Motor neuron (in vitro differentiated cells): ENCODE measurements at regions of chr11 and their contacts with region 1.

Region 1: GRCh38 chr11:67317205-67317887 is 14.0 kb downstream of the SSH3 start:
- ATAC-seq: peak; percentile 82 to 92 (median 90)
- H3K4me3 ChIP-seq: peak overlapping the region; percentile 52 to 77 (median 63)
- H3K27ac ChIP-seq: peak overlapping the region; percentile 13 to 83
- H3K4me1 ChIP-seq: peaks cover 0 to 8% of the 10 kb centered on the region in 2 donors

Region 2: GRCh38 chr11:67265633-67266423 is 51.5 kb before region 1 on chr11:
- in situ Hi-C with region 1: loop called in 1 of 9 experiments (anchors 10 kb)
- ATAC-seq: peak; percentile 59 to 67 (median 64)
- H3K4me3 ChIP-seq: peak overlapping the region; percentile 70 to 100 (median 85)
- H3K27ac ChIP-seq: peak overlapping the region; percentile 65 to 88
- H3K4me1 ChIP-seq: peaks cover 27 to 35% of the 10 kb centered on the region in 2 donors

Region 3: GRCh38 chr11:67428052-67428914 is 110.9 kb after region 1 on chr11 and contains the start of gene RPS6KB2:
- in situ Hi-C with region 1: no loop called
- ATAC-seq: peak; percentile 91 to 97 (median 92)
- H3K4me3 ChIP-seq: peak within 1 kb of the TSS; percentile 70 to 99 (median 88)
- H3K27ac ChIP-seq: peak within 1 kb of the TSS; percentile 85 to 89
- H3K4me1 ChIP-seq: peaks cover 9 to 10% of the 10 kb centered on the region in 2 donors
- total RNA-seq, gene RPS6KB2: 21.8 to 48.3 (median 30.6) TPM

Region 4: GRCh38 chr11:67516806-67517205 is 199.5 kb after region 1 on chr11:
- in situ Hi-C with region 1: no loop called
- ATAC-seq: peak in 1 of 8 experiments; percentile 9
- H3K4me3 ChIP-seq: no peak overlapping the region
- H3K27ac ChIP-seq: no peak overlapping the region
- H3K4me1 ChIP-seq: no peaks in the 10 kb centered on the region

Region 5: DNA sequence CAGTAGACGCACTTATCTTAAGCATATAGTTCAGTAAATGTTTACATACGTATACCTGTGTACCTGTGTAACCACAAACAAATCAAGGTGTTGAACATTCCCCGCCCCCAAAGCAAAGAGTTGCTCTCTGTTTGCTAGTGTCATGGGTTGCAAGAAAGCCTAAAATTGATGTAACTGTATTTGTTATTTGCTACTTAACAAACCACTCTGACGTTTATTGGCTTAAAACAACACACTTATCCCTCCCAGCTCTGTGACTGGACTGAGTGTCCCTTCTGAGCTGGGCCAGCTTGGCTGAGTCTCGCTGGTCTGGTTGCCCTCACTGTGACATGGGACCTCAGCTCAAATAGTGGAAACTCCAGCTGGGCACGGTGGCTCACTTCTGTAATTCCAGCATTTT is 231.3 kb after region 1 on chr11:
- in situ Hi-C with region 1: no loop called
- ATAC-seq: no peak
- H3K4me3 ChIP-seq: no peak overlapping the region
- H3K27ac ChIP-seq: no peak overlapping the region
- H3K4me1 ChIP-seq: no peaks in the 10 kb centered on the region